Sigmoid colon (tissue), 7 donors: ENCODE measurements at regions of chr19 and their contacts with region 1.

Region 1: GRCh38 chr19:44954824-44955586 is at the start of gene CLPTM1:
- DNase-seq: peak; percentile 98
- H3K4me3 ChIP-seq: peak within 1 kb of the TSS; percentile 72 to 96 (median 88)
- H3K27ac ChIP-seq: peak within 1 kb of the TSS; percentile 88 to 95 (median 90)
- H3K4me1 ChIP-seq: peaks cover 0 to 50% (median 46%) of the 10 kb centered on the region in 4 donors
- H3K27me3 ChIP-seq: no peaks in the 10 kb centered on the region
- CTCF ChIP-seq: no peak
- EP300 ChIP-seq: peak in 2 of 4 donors; percentile 15 to 22
- POLR2A ChIP-seq: peak; percentile 55 to 69
- total RNA-seq, gene CLPTM1: 31.6 to 51.5 (median 45.1) TPM

Region 2: GRCh38 chr19:44903602-44904425 is 51.2 kb before region 1 on chr19:
- intact Hi-C with region 1: loop called (anchors 1 kb)
- DNase-seq: peak; percentile 82
- H3K4me3 ChIP-seq: no peak overlapping the region
- H3K27ac ChIP-seq: no peak overlapping the region
- H3K4me1 ChIP-seq: peaks cover 0 to 6% (median 5%) of the 10 kb centered on the region in 4 donors
- H3K27me3 ChIP-seq: peaks cover 9 to 34% (median 24%) of the 10 kb centered on the region in 3 donors
- CTCF ChIP-seq: peak; percentile 82 to 100 (median 96)
- EP300 ChIP-seq: no peak
- POLR2A ChIP-seq: no peak

Region 3: DNA sequence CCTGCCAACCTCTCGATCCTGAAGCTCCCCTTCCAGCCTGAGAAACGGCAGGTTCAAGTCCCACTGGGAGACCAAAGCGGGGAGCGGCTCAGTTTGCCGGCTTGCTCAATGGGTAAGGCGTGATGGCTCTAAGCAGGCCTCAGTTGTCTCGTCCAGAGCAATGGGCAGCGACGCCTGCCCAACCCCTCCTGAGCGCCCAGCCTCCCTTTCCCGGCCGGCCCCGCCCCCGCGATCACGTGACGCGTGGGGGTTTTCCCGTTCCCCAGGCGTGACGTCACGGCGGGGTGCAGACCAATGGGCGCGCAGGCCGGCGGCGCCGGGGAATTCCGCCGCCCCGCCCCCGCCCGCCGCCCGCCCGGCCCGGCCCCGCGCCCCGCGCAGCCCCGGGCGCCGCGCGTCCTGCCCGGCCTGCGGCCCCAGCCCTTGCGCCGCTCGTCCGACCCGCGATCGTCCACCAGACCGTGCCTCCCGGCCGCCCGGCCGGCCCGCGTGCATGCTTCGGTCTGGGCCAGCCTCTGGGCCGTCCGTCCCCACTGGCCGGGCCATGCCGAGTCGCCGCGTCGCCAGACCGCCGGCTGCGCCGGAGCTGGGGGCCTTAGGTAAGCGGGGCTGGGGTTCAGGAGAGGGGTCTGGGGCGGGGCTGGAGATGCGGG is 46.2 kb after region 1 on chr19 and contains the start of gene RELB:
- intact Hi-C with region 1: loop called (anchors 2 kb)
- DNase-seq: peak; percentile 98
- H3K4me3 ChIP-seq: peak within 1 kb of the TSS; percentile 86 to 91 (median 88)
- H3K27ac ChIP-seq: peak within 1 kb of the TSS; percentile 100
- H3K4me1 ChIP-seq: peaks cover 0 to 15% (median 13%) of the 10 kb centered on the region in 4 donors
- H3K27me3 ChIP-seq: no peaks in the 10 kb centered on the region
- CTCF ChIP-seq: no peak
- EP300 ChIP-seq: peak in 2 of 4 donors; percentile 33 to 56
- POLR2A ChIP-seq: no peak
- total RNA-seq, gene RELB: 3.2 to 16.7 (median 4.1) TPM